ENCODE measurements at regions of chr1 and their contacts with region 1.

Region 1: DNA sequence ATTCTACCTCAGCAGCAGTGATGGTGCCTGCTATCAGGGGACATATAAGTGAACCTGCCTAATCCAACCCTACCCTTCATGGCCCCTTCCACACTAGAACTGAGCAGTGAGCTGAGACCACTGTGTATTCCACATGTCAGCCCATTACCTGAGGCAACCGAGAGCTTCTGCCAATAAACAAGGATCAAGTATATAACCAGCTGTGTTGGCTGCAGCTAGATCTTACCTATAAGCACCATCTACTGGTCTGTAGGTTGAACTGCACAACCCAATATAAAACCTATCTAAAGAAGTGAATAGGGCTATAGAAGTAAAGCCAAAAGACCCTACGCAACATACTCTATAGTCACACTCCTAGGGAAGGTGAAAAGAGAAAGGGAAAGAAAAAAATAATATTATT is 376.9 kb downstream of the HHIPL2 start:
- DNase-seq: peak; percentile 40
- CTCF ChIP-seq: peak; percentile 70

Region 2: GRCh38 chr1:221741711-221742554 is 429.1 kb before region 1 on chr1 and contains the start of gene DUSP10:
- in situ Hi-C with region 1: loop called (anchors 25 kb)
- DNase-seq: peak; percentile 98
- CTCF ChIP-seq: peak; percentile 34

Region 3: DNA sequence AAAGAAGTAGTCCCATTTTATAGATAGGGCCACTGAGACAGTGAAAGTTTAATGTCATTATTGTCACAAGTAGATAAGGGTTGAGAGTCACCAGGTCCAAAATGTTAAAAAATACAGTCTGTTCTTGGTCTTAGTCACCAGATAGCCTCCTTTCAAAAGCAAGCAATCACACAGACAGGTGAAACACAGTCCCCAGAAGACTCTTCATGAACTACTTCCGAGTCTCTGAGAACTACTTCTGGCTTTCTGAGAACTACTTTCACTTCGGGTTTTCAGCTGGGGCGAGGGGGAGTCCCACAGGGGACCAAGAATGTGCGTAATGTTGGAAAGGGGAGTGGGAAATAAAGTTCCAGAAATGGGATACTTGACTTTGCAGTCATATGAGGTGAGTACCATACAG is 233.7 kb after region 1 on chr1:
- in situ Hi-C with region 1: no loop called
- DNase-seq: peak; percentile 50
- CTCF ChIP-seq: no peak

Region 4: GRCh38 chr1:222539951-222540597 is 369.1 kb after region 1 on chr1:
- in situ Hi-C with region 1: no loop called
- DNase-seq: no peak
- CTCF ChIP-seq: no peak

Measured in GM13977 (cell line).